Activated CD4-positive, alpha-beta T cell treated with anti-CD3 and anti-CD28 coated beads, Interleukin-2, amount 10 ng/mL, durations not matched to agents 24 days and 14 days (primary cell): ENCODE measurements at regions of chr6 and their contacts with region 1.

Region 1: GRCh38 chr6:134174672-134175198 is 122.3 kb upstream of the SLC2A12 start:
- DNase-seq: peak; percentile 97
- H3K4me3 Mint-ChIP-seq: peak overlapping the region; percentile 91
- H3K27ac Mint-ChIP-seq: peak overlapping the region; percentile 97
- H3K4me1 Mint-ChIP-seq: peaks cover 62% of the 10 kb centered on the region
- H3K27me3 Mint-ChIP-seq: no peaks in the 10 kb centered on the region

Region 2: DNA sequence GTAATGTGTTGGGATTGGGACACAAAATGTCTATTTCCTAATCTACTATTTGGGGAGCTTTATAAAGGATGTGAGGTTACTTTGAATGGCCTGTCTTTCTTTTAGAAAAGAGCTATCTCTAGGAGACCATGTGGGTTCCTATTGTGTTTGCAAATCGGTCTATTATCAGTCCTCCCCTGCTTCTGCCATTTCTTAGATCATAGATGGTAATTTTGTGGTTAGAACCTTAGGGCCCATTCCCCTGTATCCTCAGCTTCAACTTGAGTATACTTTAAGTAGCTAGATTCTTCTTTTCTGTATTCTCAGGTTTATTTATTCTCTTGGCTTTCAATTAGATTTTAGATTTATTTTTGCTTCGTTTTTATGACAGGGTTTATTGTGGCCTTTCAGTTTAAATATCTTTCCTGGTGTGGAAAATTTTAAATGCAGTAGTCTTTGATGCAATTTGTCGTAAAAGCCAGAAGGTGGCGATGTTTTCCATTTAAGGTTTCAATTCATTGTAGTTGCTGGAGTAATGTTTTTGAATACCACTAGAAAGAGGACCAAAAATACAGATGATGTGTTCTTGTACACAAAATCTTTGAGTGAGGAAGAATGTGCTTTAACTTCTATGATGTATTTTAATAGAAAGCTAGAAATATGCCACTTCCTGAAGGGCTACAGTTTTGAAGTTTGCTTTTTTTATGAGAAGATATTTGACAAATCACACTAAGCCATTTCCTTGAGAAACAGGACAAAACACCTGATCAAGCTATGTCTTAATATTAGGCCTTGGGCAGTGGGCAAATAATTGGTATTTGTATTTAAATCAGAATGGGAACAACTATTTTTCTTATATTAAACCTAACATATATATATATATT is 201.4 kb before region 1 on chr6:
- intact Hi-C with region 1: no loop called
- DNase-seq: peak; percentile 61
- H3K4me3 Mint-ChIP-seq: no peak overlapping the region
- H3K27ac Mint-ChIP-seq: no peak overlapping the region
- H3K4me1 Mint-ChIP-seq: peaks cover 13% of the 10 kb centered on the region
- H3K27me3 Mint-ChIP-seq: no peaks in the 10 kb centered on the region

Region 3: GRCh38 chr6:134247231-134247833 is 72.6 kb after region 1 on chr6:
- intact Hi-C with region 1: loop called (anchors 1 kb)
- DNase-seq: peak; percentile 94
- H3K4me3 Mint-ChIP-seq: peak overlapping the region; percentile 54
- H3K27ac Mint-ChIP-seq: peak overlapping the region; percentile 93
- H3K4me1 Mint-ChIP-seq: peaks cover 48% of the 10 kb centered on the region
- H3K27me3 Mint-ChIP-seq: no peaks in the 10 kb centered on the region

Region 4: GRCh38 chr6:134379086-134379485 is 204.4 kb after region 1 on chr6:
- intact Hi-C with region 1: loop called (anchors 1 kb)
- DNase-seq: peak; percentile 83
- H3K4me3 Mint-ChIP-seq: peak overlapping the region; percentile 67
- H3K27ac Mint-ChIP-seq: peak overlapping the region; percentile 89
- H3K4me1 Mint-ChIP-seq: peaks cover 36% of the 10 kb centered on the region
- H3K27me3 Mint-ChIP-seq: no peaks in the 10 kb centered on the region

Region 5: DNA sequence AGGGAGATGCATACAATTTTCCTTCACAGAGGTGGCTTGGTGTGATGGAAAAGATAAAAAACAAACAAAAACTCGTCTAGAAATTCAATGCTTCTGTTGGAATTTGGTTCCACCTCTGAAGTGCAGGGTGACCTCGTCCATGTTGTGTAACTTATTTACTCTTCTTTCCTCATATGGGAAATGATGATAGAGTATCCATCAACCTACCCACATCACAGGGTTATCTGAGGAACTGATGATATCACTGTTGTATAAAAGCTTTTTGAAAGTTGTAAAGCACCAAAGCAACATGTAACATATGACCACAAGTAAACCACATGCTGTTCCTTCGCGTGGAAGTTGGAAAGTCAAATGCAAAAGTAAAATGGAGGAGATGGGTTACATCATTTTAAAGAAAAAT is 355.2 kb after region 1 on chr6:
- intact Hi-C with region 1: loop called (anchors 5 kb)
- DNase-seq: peak; percentile 77
- H3K4me3 Mint-ChIP-seq: no peak overlapping the region
- H3K27ac Mint-ChIP-seq: no peak overlapping the region
- H3K4me1 Mint-ChIP-seq: peaks cover 44% of the 10 kb centered on the region
- H3K27me3 Mint-ChIP-seq: no peaks in the 10 kb centered on the region

Region 6: DNA sequence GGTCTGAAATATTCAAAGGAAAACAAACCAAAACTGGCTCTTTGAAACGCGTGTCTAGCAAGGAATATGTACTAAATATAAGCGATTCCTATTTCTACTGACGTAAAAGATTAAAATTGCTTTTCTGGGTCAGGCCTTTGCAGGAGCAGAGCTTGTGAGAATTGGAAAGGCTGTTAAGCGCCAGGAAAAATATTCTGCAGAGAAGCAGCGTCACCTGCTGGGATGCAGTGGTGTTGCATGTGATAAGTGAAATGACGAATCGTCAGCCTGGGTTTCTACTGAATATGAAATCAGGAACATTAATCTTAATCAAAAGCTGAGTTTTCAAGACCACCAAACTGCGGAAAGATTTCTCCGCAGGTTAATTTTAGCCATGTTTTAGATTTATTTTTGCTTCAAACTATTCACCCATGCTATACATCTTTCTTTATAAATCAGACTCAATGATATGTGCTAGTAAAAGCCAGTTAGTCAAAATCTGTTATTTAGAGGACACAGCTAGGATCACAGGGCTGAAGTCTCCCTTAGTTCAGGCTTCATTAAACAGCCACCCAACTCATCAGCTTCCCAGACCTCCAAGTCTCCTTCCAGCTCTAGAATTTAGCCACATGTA is 707.8 kb after region 1 on chr6:
- intact Hi-C with region 1: loop called (anchors 1 kb)
- DNase-seq: peak; percentile 86
- H3K4me3 Mint-ChIP-seq: no peak overlapping the region
- H3K27ac Mint-ChIP-seq: no peak overlapping the region
- H3K4me1 Mint-ChIP-seq: no peaks in the 10 kb centered on the region
- H3K27me3 Mint-ChIP-seq: peaks cover 23% of the 10 kb centered on the region

Region 7: GRCh38 chr6:135183532-135184440 is 1009.1 kb after region 1 on chr6:
- intact Hi-C with region 1: loop called (anchors 5 kb)
- DNase-seq: peak; percentile 94
- H3K4me3 Mint-ChIP-seq: peak overlapping the region; percentile 92
- H3K27ac Mint-ChIP-seq: peak overlapping the region; percentile 89
- H3K4me1 Mint-ChIP-seq: peaks cover 35% of the 10 kb centered on the region
- H3K27me3 Mint-ChIP-seq: no peaks in the 10 kb centered on the region